Endothelial cell of umbilical vein (primary cell): ENCODE measurements at regions of chr1 and their contacts with region 1.

Region 1: GRCh38 chr1:40032240-40032891 is 8.2 kb upstream of the CAP1 start:
- DNase-seq: peak; percentile 71
- H3K4me3 ChIP-seq: no peak overlapping the region
- H3K27ac ChIP-seq: no peak overlapping the region
- H3K4me1 ChIP-seq: peaks cover 10% of the 10 kb centered on the region
- H3K27me3 ChIP-seq: no peaks in the 10 kb centered on the region
- CTCF ChIP-seq: peak; percentile 56 to 59
- POLR2A ChIP-seq: no peak

Region 2: DNA sequence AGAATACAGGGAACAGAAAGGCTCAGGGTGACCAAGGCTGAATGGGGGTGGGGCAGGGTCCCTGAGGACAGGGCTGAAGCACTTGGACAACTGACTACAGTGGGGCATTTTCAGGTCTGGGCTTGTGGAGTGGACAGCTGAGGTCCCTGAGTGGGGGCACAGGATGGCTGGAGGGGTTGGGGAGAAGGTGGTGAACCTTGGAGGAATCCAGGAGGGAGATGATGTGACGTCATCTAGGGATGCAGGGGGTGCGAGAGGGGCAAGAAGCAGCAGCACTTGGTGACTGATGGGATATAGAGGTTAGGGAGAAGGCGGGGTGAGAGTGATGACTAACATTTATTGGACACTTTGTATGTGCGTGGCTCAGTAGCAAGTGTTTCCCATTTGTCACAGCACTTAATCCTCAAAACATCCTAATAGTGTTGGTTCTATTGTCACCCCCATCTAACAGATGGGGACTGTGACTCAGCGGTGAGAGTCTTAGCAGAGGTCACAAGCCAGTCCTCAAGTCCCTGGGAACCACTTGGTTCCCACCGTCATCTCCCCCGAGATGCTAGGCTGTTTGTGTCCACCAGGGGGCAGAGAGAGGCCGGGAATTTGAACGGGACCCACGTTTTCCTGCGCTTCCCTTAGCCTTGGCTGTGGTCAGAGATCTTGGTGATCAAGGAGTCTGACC is 215.8 kb before region 1 on chr1:
- CTCF ChIA-PET with region 1: interaction called, 48 read pairs
- POLR2A ChIA-PET with region 1: no interaction called
- dilution Hi-C with region 1: no loop called
- intact Hi-C with region 1: loop called (anchors 1 kb)
- DNase-seq: peak; percentile 78
- H3K4me3 ChIP-seq: no peak overlapping the region
- H3K27ac ChIP-seq: no peak overlapping the region
- H3K4me1 ChIP-seq: no peaks in the 10 kb centered on the region
- H3K27me3 ChIP-seq: no peaks in the 10 kb centered on the region
- CTCF ChIP-seq: peak; percentile 77 to 78
- POLR2A ChIP-seq: no peak

Region 3: GRCh38 chr1:39919545-39919944 is 112.8 kb before region 1 on chr1:
- CTCF ChIA-PET with region 1: interaction called, 114 read pairs
- POLR2A ChIA-PET with region 1: no interaction called
- dilution Hi-C with region 1: no loop called
- intact Hi-C with region 1: no loop called
- DNase-seq: peak; percentile 49
- H3K4me3 ChIP-seq: no peak overlapping the region
- H3K27ac ChIP-seq: no peak overlapping the region
- H3K4me1 ChIP-seq: no peaks in the 10 kb centered on the region
- H3K27me3 ChIP-seq: peaks cover 0 to 10% of the 10 kb centered on the region in 2 experiments
- CTCF ChIP-seq: peak; percentile 27 to 38
- POLR2A ChIP-seq: no peak

Region 4: DNA sequence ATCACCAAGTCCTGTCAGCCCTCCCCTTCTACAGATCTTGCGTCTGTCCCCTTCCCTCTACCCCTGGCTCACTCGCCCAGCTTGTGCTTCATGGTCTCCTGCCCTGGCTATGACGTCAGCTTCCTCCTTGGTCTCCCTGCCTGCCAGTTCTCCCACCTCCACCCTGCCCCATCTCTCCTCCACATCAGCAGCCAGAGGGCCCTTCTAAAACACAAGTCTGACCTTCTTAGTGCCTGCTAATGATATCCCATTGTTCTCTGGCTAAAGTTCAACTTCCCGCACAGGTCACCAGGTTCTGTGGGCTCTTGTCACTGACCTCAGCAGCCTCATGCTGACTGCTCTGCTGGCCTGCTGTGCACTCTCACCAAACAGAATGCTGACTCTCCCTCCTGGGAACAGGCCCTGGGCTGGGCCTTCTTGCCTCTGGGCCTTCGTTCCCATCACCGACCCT is 106.0 kb before region 1 on chr1:
- CTCF ChIA-PET with region 1: interaction called, 114 read pairs
- POLR2A ChIA-PET with region 1: no interaction called
- dilution Hi-C with region 1: no loop called
- intact Hi-C with region 1: no loop called
- DNase-seq: no peak
- H3K4me3 ChIP-seq: no peak overlapping the region
- H3K27ac ChIP-seq: no peak overlapping the region
- H3K4me1 ChIP-seq: no peaks in the 10 kb centered on the region
- H3K27me3 ChIP-seq: peaks cover 0 to 10% of the 10 kb centered on the region in 2 experiments
- CTCF ChIP-seq: no peak
- POLR2A ChIP-seq: no peak

Region 5: DNA sequence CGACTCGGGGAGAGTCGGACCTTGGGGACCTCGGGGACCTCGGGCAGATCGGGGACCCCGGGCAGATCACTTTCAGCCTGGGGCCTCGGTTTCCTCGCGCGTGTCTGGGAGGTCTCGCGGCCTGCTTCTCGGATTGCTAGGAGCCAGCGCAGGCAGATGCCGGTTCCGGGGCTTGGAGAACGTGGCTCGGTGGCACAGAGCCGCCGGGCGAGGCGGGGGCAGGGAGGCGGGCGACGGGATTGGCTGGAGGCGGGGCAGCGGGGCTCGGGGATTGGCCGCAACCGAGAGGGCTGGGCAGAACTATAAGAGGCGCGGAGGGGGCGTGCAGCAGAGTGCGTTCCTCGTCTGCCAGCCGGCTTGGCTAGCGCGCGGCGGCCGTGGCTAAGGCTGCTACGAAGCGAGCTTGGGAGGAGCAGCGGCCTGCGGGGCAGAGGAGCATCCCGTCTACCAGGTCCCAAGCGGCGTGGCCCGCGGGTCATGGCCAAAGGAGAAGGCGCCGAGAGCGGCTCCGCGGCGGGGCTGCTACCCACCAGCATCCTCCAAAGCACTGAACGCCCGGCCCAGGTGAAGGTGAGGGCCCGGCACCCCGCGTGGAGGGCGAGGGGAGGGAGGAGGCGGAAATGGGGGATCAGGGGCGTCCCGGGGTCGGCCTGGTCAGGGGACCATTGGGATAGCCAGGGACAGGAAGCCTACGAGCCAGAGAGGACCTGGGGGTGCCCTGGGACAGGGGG is 77.4 kb before region 1 on chr1 and contains the start of gene MFSD2A:
- CTCF ChIA-PET with region 1: interaction called, 21 read pairs
- POLR2A ChIA-PET with region 1: no interaction called
- dilution Hi-C with region 1: no loop called
- intact Hi-C with region 1: no loop called
- DNase-seq: peak; percentile 91
- H3K4me3 ChIP-seq: peak within 1 kb of the TSS; percentile 47 to 87 (median 75)
- H3K27ac ChIP-seq: peak within 1 kb of the TSS; percentile 10
- H3K4me1 ChIP-seq: peaks cover 12% of the 10 kb centered on the region
- H3K27me3 ChIP-seq: no peaks in the 10 kb centered on the region
- CTCF ChIP-seq: no peak
- POLR2A ChIP-seq: no peak
- total RNA-seq, gene MFSD2A: 4.3 and 5.5 TPM in 2 replicates

Region 6: DNA sequence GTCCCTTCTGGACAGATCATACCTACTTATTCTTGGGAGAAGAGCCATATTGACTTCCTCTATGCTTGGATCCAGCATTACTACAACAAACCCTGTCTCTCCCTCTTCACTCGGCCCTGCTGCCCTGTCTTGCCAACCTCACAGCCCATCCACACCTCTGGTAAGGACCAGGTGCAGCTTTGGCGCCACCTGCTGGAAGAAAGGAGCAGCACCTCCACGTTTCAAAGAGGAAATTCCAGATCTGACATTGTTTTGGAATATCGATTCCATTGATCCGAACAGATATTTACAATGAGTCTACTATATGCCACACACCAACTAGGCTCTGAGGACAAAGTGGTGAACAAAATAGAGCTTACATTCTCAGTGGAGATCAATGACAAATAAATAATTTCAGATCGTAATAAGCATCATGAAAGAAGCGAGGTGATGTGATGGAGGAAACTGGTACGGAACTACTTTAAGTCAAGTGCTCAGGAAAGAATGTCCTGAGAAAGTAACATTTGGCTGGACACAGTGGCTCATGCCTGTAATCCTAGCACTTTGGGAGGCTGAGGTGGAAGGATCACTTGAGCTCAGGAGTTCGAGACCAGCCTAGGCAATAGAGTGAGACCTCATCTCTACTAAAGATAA is 58.7 kb before region 1 on chr1:
- CTCF ChIA-PET with region 1: interaction called, 51 read pairs
- POLR2A ChIA-PET with region 1: no interaction called
- dilution Hi-C with region 1: no loop called
- intact Hi-C with region 1: loop called (anchors 1 kb)
- DNase-seq: peak; percentile 63
- H3K4me3 ChIP-seq: no peak overlapping the region
- H3K27ac ChIP-seq: no peak overlapping the region
- H3K4me1 ChIP-seq: no peaks in the 10 kb centered on the region
- H3K27me3 ChIP-seq: no peaks in the 10 kb centered on the region
- CTCF ChIP-seq: peak; percentile 87 to 94
- POLR2A ChIP-seq: no peak

Region 7: DNA sequence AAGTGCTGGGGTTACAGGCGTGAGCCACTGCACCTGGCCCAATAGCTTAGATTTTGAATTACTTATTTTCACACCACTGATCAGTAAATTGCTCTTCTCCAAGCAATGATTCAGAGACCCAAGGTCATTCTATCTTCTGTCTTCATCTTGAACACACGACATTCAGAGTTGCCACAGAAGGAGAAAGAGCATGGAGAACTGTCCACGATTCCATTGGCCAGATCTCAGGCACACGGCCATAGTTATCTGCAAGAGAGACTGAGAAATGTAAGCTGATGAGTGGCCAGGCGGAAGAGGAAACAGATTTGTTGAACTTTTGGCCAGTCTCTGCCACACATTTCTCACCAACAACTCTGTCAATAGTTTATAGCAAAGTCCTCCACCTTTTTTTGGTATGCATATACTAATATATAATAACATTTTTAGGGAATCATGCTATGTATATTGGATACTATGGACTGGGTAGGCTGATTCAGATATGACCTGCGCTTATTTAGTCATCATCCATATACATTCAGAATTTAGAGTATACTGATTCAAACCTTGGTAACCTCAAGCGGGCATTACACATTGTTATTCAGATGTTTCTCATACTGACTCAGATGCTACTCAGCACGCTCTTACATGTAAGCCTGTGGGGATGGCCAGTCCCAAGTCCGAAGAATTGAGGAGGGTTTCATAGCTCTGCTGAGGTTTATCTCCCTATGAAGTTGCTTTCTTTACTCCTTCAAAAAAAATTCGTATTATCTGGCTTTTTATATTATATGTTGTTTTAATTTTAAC is 17.4 kb before region 1 on chr1:
- CTCF ChIA-PET with region 1: interaction called, 28 read pairs
- POLR2A ChIA-PET with region 1: interaction called, 3 read pairs
- dilution Hi-C with region 1: no loop called
- intact Hi-C with region 1: no loop called
- DNase-seq: peak; percentile 81
- H3K4me3 ChIP-seq: no peak overlapping the region
- H3K27ac ChIP-seq: peak overlapping the region; percentile 92
- H3K4me1 ChIP-seq: peaks cover 22% of the 10 kb centered on the region
- H3K27me3 ChIP-seq: no peaks in the 10 kb centered on the region
- CTCF ChIP-seq: no peak
- POLR2A ChIP-seq: no peak